GM12878 (cell line): ENCODE measurements at regions of chr1 and their contacts with region 1.

Region 1: GRCh38 chr1:209827384-209828262 is at the start of gene UTP25:
- DNase-seq: peak; percentile 97
- ATAC-seq: peak; percentile 93
- H3K4me3 ChIP-seq: peak within 1 kb of the TSS; percentile 99
- H3K27ac ChIP-seq: peak within 1 kb of the TSS; percentile 62
- H3K4me1 ChIP-seq: no peaks in the 10 kb centered on the region
- H3K27me3 ChIP-seq: no peaks in the 10 kb centered on the region
- CTCF ChIP-seq: peak; percentile 75 to 81 (median 80)
- EP300 ChIP-seq: 0 out of 4 replicates have a peak, but pooled peaks of 1 of the 2 experiments have one; percentile 16
- POLR2A ChIP-seq: peak; percentile 79
- RAD21 ChIP-seq: no peak
- polyA plus RNA-seq, gene UTP25: 3.0 TPM

Region 2: DNA sequence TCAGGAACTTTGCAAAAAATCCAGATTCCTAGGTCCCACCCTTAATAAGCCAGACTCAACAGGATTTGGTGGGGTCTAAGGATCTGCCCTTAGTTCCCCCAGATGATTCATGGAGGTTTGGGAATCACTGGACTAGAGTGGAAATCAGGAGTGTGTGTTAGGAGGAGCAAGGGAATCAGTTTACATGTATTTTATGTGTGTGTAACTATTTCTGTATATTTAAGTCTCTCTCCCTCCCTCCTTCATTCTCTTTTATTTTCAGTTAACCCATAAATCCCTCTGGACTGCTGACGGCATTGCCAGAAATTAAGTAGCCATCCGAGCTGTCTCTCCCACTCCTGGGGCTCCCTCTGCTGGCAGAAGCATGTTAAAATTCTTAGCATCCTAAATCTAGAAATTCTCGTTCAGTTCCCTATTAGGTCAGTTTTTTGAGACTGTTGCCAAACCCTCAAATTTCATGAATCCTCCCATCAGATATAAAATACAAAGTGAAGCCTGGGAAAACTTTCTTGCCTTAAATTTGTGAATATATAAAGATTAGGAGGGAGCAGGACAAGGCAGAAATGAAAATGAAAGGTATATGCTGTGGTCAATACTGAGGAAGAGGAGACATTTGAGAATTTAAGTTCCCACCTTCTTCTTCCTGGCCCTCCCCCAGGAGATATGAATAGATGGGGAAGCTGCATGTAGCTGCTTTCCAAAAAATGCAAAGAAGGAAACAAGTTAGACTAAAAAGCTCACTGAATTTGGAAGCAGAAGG is 134.7 kb before region 1 on chr1:
- CTCF ChIA-PET with region 1: no interaction called
- POLR2A ChIA-PET with region 1: no interaction called
- RAD21 ChIA-PET with region 1: no interaction called
- SMC1A ChIA-PET with region 1: no interaction called
- in situ Hi-C with region 1: no loop called
- intact Hi-C with region 1: loop called (anchors 2 kb)
- DNase-seq: peak; percentile 34
- ATAC-seq: peak; percentile 89
- H3K4me3 ChIP-seq: no peak overlapping the region
- H3K27ac ChIP-seq: no peak overlapping the region
- H3K4me1 ChIP-seq: no peaks in the 10 kb centered on the region
- H3K27me3 ChIP-seq: no peaks in the 10 kb centered on the region
- CTCF ChIP-seq: peak; percentile 80 to 92 (median 83)
- EP300 ChIP-seq: 0 out of 4 replicates have a peak, but pooled peaks of 1 of the 2 experiments have one; percentile 31
- POLR2A ChIP-seq: no peak
- RAD21 ChIP-seq: peak; percentile 97

Region 3: DNA sequence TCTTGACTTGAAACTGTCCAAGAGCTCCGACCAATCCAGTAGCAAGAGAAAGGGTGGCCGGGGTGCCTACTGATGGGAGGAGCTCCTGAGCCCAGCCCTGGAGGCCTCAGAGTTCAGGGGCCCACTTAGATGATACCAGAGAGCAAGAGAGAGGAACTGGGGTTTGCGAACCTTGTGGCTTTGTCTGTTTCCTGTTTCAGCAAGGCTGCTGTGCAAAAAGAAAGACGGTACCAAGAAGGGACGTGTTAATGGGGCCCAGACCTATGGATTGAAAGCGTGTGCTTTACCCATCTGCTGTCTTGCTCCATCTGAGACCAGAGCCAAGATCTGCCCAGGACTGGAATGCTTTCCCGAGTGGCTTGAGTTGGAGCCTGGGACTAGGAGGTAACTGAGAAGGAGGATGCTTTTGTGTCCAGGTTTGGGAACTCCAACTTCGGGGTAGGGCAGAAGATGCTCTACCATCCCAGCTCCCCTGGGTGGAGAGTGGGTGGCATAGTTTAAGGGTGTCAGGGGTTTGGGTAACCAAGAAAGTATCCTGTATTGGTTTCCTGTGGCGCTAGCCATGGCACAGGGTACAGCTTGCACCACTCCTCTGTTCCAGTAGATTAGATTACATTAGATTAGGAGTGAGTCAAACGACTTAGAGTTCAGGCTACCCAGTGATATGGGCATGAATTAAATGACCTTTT is 71.6 kb before region 1 on chr1 and contains the start of gene TRAF3IP3:
- CTCF ChIA-PET with region 1: interaction called, 39 read pairs
- POLR2A ChIA-PET with region 1: interaction called, 4 read pairs
- RAD21 ChIA-PET with region 1: interaction called, 11 read pairs
- SMC1A ChIA-PET with region 1: interaction called, 13 read pairs
- in situ Hi-C with region 1: no loop called
- intact Hi-C with region 1: no loop called
- DNase-seq: peak; percentile 83
- ATAC-seq: peak; percentile 86
- H3K4me3 ChIP-seq: peak within 1 kb of the TSS; percentile 73
- H3K27ac ChIP-seq: peak within 1 kb of the TSS; percentile 92
- H3K4me1 ChIP-seq: peaks cover 53% of the 10 kb centered on the region
- H3K27me3 ChIP-seq: no peaks in the 10 kb centered on the region
- CTCF ChIP-seq: no peak
- EP300 ChIP-seq: 0 out of 4 replicates have a peak, but pooled peaks of 1 of the 2 experiments have one; percentile 13
- POLR2A ChIP-seq: peak; percentile 84
- RAD21 ChIP-seq: no peak
- polyA plus RNA-seq, gene TRAF3IP3: 117 to 121 TPM

Region 4: GRCh38 chr1:209769171-209769904 is 58.3 kb before region 1 on chr1:
- CTCF ChIA-PET with region 1: interaction called, 56 read pairs
- POLR2A ChIA-PET with region 1: interaction called, 5 read pairs
- RAD21 ChIA-PET with region 1: interaction called, 5 read pairs
- SMC1A ChIA-PET with region 1: interaction called, 34 read pairs
- in situ Hi-C with region 1: no loop called
- intact Hi-C with region 1: no loop called
- DNase-seq: peak; percentile 75
- ATAC-seq: peak; percentile 84
- H3K4me3 ChIP-seq: peak overlapping the region; percentile 72
- H3K27ac ChIP-seq: peak overlapping the region; percentile 93
- H3K4me1 ChIP-seq: peaks cover 52% of the 10 kb centered on the region
- H3K27me3 ChIP-seq: no peaks in the 10 kb centered on the region
- CTCF ChIP-seq: no peak
- EP300 ChIP-seq: peak; percentile 73 to 79; a peak in 3 of 4 replicates
- POLR2A ChIP-seq: no peak
- RAD21 ChIP-seq: no peak

Region 5: GRCh38 chr1:209784265-209785169 is 43.1 kb before region 1 on chr1 and contains the start of gene C1orf74:
- CTCF ChIA-PET with region 1: interaction called, 72 read pairs
- POLR2A ChIA-PET with region 1: interaction called, 4 read pairs
- RAD21 ChIA-PET with region 1: interaction called, 6 read pairs
- SMC1A ChIA-PET with region 1: interaction called, 16 read pairs
- in situ Hi-C with region 1: no loop called
- intact Hi-C with region 1: loop called (anchors 2 kb)
- DNase-seq: peak; percentile 92
- ATAC-seq: peak; percentile 100
- H3K4me3 ChIP-seq: peak within 1 kb of the TSS; percentile 80
- H3K27ac ChIP-seq: peak within 1 kb of the TSS; percentile 76
- H3K4me1 ChIP-seq: 0 out of 2 replicates have a peak, but pooled peaks cover 2% of the 10 kb centered on the region
- H3K27me3 ChIP-seq: no peaks in the 10 kb centered on the region
- CTCF ChIP-seq: no peak
- EP300 ChIP-seq: no peak
- POLR2A ChIP-seq: peak; percentile 90
- RAD21 ChIP-seq: no peak
- polyA plus RNA-seq, gene C1orf74: 3.4 to 4.4 TPM

Region 6: GRCh38 chr1:209815931-209816341 is 11.7 kb before region 1 on chr1:
- CTCF ChIA-PET with region 1: interaction called, 78 read pairs
- POLR2A ChIA-PET with region 1: interaction called, 5 read pairs
- RAD21 ChIA-PET with region 1: interaction called, 6 read pairs
- SMC1A ChIA-PET with region 1: interaction called, 49 read pairs
- in situ Hi-C with region 1: no loop called
- intact Hi-C with region 1: no loop called
- DNase-seq: no peak
- ATAC-seq: peak; percentile 64
- H3K4me3 ChIP-seq: no peak overlapping the region
- H3K27ac ChIP-seq: no peak overlapping the region
- H3K4me1 ChIP-seq: no peaks in the 10 kb centered on the region
- H3K27me3 ChIP-seq: no peaks in the 10 kb centered on the region; a peak in 1 of 4 replicates
- CTCF ChIP-seq: no peak
- EP300 ChIP-seq: no peak
- POLR2A ChIP-seq: no peak
- RAD21 ChIP-seq: no peak

Region 7: DNA sequence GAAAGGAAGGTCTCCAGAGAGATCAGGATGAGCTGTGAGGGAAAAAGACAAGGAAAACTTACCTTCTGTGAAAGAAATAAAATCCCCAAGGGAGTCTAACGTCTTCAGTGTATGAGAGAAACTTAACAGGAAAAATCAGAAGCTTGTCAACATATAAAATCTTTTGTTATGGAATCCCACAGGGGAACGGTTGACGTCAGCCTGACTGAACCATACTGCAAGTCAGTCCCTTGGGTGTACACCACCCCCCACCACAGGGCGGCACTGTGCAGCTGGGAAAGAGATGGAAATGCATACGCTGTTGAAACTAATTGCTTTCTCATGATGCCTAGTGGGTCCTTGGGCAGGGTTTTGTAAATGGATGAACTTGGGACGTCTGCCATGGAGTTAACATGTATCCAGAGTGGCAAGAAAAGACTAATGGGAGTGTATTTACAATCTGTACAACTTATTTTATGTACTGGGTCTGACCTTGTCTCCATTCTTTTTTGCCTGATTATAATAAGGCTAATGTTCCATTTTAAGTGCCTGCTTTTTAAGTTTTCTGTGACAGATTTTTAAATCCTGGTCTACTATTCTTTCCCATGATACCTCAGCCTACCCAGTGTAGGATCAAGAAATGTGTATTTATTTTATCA is 22.8 kb after region 1 on chr1:
- CTCF ChIA-PET with region 1: interaction called, 20 read pairs
- POLR2A ChIA-PET with region 1: no interaction called
- RAD21 ChIA-PET with region 1: no interaction called
- SMC1A ChIA-PET with region 1: interaction called, 6 read pairs
- in situ Hi-C with region 1: no loop called
- intact Hi-C with region 1: no loop called
- DNase-seq: no peak
- ATAC-seq: peak; percentile 88
- H3K4me3 ChIP-seq: no peak overlapping the region
- H3K27ac ChIP-seq: no peak overlapping the region
- H3K4me1 ChIP-seq: no peaks in the 10 kb centered on the region
- H3K27me3 ChIP-seq: no peaks in the 10 kb centered on the region
- CTCF ChIP-seq: peak; percentile 57 to 66 (median 65)
- EP300 ChIP-seq: no peak
- POLR2A ChIP-seq: no peak
- RAD21 ChIP-seq: 0 out of 2 replicates have a peak, but pooled peaks have one; percentile 35